Activated CD4-positive, alpha-beta T cell treated with anti-CD3 and anti-CD28 coated beads for 36 hours (primary cell): ENCODE measurements at regions of chr1 and their contacts with region 1.

Region 1: DNA sequence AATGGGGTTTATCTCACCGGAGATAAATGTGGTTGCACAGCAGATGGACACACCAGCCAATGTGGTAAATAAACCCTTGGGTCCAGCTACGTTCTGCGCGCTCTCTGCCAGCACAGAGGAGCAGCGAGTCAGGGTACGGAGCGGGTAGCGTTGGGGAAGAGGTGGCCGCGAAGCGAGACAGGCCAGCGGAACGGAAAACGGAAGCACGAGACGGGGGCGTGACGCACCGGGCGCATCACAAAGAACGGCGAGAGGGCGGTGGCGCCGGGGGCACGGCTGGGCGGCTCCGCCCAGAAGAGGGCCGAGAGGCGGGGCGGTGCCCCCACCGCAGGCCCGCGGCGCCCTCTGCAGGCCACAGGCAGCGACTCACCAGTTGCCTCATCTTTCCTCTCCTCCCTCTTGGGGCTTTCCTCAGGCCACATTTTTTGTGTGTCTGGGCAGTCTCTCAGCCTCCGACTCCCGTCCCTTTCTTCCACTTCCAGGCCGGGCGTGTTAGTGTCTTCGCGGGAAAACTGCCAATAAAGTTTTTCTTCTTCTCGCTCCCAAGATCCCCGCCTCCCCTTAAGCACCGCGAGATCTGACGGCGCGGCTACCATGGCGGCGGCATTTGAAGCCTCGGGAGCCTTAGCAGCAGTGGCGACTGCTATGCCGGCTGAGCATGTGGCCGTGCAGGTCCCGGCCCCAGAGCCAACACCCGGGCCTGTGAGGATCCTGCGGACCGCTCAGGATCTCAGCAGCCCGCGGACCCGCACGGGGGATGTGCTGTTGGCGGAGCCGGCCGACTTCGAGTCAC is at the start of gene DDX20:
- DNase-seq: peak; percentile 97
- ATAC-seq: peak; percentile 90
- H3K4me3 Mint-ChIP-seq: peak within 1 kb of the TSS; percentile 83
- H3K27ac Mint-ChIP-seq: peak within 1 kb of the TSS; percentile 98
- H3K4me1 Mint-ChIP-seq: peaks cover 35% of the 10 kb centered on the region
- H3K27me3 Mint-ChIP-seq: no peaks in the 10 kb centered on the region
- total RNA-seq, gene DDX20: 13.5 to 13.6 TPM

Region 2: DNA sequence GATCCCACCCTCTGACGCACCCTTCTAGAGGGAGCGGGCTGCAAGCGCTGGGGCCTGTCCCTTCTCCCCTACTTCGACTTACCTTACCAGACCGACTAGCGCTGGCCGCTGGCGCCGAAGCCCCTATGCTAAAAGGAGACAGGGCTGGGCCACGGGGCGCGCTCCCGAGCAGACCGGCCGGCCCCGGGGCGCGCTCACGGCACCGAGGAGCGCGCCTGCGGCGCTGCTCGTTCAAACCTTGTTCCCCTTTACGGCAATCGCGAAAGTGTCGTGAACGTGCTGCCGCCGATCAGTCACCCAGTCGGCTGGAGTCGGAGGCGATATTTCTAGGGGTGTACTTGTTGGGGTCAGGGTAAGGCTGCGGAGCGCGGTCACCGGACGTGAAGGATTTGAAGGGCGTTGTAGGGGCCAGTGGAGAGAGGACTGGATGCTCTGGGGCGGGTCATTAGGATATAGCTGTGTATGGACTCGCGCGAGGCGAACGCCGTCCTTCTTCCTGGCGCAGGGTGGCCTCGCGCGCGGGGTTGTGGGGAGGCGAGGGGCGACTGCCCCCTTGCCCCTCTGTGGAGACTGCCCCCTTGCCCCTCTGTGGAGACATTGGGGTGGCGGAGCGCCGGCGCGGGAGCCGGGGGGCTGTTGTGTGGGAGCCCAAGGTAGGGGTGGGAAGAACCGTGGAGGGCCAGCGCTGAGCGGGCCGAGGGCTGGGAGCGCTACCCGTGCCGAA is 615.4 kb before region 1 on chr1 and contains the starts of genes CEPT1 and DRAM2:
- CTCF ChIA-PET with region 1: no interaction called
- POLR2A ChIA-PET with region 1: no interaction called
- intact Hi-C with region 1: loop called (anchors 2 to 10 kb)
- DNase-seq: peak; percentile 98
- ATAC-seq: peak; percentile 78
- H3K4me3 Mint-ChIP-seq: peak within 1 kb of the TSS; percentile 95
- H3K27ac Mint-ChIP-seq: peak within 1 kb of the TSS; percentile 99
- H3K4me1 Mint-ChIP-seq: peaks cover 53% of the 10 kb centered on the region
- H3K27me3 Mint-ChIP-seq: no peaks in the 10 kb centered on the region
- total RNA-seq, gene CEPT1: 34.7 to 49.1 TPM
- total RNA-seq, gene DRAM2: 30.4 to 34.4 TPM

Region 3: DNA sequence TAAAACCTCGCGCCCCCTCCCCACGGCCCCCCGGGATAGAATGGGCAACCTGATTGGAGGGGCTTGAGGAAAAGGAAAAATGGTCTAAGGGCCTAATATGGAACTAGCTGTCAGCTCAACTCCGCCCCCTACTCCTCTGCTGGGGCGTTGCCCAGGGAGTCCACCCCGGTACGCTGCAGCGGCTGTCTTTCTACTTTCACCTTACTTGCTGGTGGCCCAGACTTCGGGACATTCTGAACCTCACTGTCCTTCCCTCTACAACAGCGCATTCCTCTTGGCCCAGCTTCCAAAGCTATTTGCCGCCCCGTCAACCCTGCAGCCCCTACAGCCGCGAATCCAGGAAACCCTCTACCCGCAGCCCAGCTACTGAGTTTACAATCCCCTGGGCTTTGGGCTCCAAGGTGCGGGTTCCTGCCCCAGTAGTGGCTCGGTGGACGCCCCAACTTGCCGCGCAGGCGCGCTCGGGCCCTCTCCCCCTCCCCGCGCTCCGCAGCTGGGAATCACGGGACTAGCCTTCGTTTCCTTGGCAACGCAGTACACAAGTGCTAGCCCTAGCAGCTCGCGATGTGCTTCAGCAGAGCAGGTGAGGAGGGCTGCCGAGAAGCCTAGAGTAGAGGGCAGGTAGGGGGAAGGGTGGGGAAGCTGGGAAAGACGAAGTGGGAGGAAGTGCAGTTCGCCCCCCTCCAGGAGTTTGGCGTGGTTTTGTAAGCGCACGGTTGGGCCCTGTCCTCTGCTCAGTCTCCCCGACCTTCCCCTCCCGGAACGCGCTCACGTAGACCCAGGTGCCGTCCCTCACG is 409.2 kb before region 1 on chr1:
- CTCF ChIA-PET with region 1: interaction called, 3 read pairs
- POLR2A ChIA-PET with region 1: no interaction called
- intact Hi-C with region 1: loop called in 1 of 2 experiments (anchors 1 kb)
- DNase-seq: peak; percentile 88
- ATAC-seq: peak; percentile 97
- H3K4me3 Mint-ChIP-seq: peak overlapping the region; percentile 78
- H3K27ac Mint-ChIP-seq: peak overlapping the region; percentile 68
- H3K4me1 Mint-ChIP-seq: peaks cover 17% of the 10 kb centered on the region
- H3K27me3 Mint-ChIP-seq: no peaks in the 10 kb centered on the region

Region 4: DNA sequence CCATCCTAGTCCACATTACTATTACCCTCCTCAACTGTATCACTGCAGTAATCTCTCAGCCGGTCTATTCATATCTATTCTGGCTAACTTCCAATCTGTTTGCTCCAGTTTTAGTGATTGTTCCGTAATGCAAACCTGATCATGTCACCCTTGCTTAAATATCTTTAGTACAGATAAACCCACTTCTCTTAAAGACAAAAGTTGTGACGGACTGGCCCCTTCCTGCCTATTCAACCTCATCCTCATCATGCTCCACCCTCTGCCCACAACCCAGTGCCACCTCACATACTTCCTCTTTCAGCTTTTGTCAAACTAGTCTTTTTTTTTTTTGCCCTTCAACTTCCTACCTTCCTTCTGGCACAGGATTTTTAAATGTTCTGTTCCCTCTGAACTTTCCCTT is 284.5 kb before region 1 on chr1:
- CTCF ChIA-PET with region 1: interaction called, 5 read pairs
- POLR2A ChIA-PET with region 1: no interaction called
- intact Hi-C with region 1: loop called in 1 of 2 experiments (anchors 5 kb)
- DNase-seq: peak; percentile 76
- ATAC-seq: peak; percentile 82
- H3K4me3 Mint-ChIP-seq: no peak overlapping the region
- H3K27ac Mint-ChIP-seq: no peak overlapping the region
- H3K4me1 Mint-ChIP-seq: peaks cover 35% of the 10 kb centered on the region
- H3K27me3 Mint-ChIP-seq: no peaks in the 10 kb centered on the region

Region 5: DNA sequence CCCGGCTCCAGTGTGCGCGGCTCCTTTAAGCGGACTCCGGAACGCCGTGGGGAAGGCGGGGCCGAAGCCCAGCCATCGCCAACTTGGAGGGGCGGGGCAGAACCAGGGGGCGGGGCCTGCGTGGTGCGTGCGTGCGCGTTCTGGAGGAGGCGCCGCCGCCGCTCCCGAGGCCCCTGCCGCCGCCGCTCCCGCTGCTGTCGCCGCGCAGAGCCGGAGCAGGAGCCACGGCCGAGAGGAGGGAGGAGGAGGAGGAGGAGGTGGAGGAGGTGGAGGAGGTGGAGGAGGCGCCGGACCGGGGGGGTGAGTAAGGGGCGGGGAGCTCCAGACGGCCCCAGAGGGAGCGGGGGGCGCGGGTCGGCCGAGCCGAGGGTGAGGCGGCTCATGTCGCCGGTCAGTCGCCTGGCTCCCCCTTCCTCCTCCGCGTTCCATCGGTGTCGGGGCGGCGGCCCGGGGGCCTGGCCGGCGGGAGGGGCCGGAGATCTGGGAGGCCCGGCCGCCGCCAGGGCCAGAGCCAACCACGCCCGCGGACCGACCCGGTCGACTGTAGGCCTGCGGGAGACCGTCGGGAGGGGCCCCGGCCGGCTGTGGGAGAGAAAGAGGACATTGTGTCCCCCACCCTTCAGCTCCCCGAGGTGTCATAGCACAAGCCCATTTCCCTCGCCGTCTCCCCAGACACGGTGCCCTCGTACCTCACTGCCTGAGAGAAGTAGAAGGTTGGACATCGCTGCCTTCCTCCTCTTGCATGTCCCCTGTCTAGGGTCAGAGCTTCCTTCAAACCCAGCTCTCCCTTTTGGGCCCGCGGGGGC is 135.7 kb before region 1 on chr1 and contains the start of gene RAP1A:
- CTCF ChIA-PET with region 1: no interaction called
- POLR2A ChIA-PET with region 1: interaction called, 3 read pairs
- intact Hi-C with region 1: loop called (anchors 1 to 5 kb)
- DNase-seq: peak; percentile 98
- ATAC-seq: peak; percentile 71
- H3K4me3 Mint-ChIP-seq: peak within 1 kb of the TSS; percentile 96
- H3K27ac Mint-ChIP-seq: peak within 1 kb of the TSS; percentile 97
- H3K4me1 Mint-ChIP-seq: peaks cover 72% of the 10 kb centered on the region
- H3K27me3 Mint-ChIP-seq: no peaks in the 10 kb centered on the region
- total RNA-seq, gene RAP1A: 182 to 214 TPM

Region 6: DNA sequence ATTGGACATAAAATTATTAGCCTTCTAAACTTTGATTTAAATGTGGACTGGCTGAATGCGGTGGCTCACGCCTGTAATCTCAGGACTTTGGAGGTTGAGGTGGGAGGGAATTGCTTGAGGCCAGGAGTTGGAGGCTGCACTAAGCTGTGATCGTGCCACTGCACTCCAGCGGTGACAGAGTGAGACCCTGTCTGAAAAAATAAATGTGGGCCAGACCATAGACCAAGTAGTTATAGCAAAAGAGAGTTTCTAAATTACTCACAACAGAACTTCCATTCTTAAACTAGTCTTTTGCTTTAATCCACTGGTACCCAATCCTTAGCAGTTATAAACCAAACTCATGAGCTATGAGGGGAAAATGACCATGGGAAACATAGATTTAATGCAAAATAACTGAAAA is 100.7 kb before region 1 on chr1:
- CTCF ChIA-PET with region 1: no interaction called
- POLR2A ChIA-PET with region 1: no interaction called
- intact Hi-C with region 1: no loop called
- DNase-seq: no peak
- ATAC-seq: peak; percentile 83
- H3K4me3 Mint-ChIP-seq: no peak overlapping the region
- H3K27ac Mint-ChIP-seq: peak overlapping the region; percentile 28
- H3K4me1 Mint-ChIP-seq: peaks cover 57% of the 10 kb centered on the region
- H3K27me3 Mint-ChIP-seq: no peaks in the 10 kb centered on the region

Region 7: DNA sequence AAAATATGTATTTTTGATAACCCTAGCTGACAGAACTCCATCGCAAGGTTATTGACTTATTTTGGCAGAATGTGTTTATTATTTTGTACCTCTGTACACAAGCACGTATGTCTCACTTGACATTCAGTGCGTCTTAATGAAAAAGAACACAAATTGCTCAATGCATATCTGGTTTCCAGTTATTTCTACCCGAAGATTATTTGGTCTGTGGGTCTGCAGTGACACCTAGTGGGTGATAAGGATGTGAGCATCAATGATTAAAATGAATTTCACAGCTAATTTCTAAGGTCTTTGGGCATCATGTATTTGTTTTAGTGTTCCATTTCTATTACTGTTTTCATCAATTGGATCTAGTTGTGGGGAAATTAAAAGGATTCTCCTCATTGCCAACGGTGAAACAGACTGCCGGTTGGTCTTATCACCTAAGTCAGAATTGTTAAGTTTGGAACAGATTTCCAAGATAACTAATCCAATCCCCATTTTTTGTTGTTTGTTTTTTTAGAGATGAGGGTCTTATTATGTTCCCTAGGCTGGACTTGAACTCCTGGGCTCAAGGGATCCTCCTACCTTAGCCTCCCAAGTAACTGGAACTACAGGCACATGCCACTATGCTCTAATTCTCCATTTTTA is 14.1 kb after region 1 on chr1:
- CTCF ChIA-PET with region 1: interaction called, 18 read pairs
- POLR2A ChIA-PET with region 1: no interaction called
- intact Hi-C with region 1: no loop called
- DNase-seq: peak; percentile 66
- ATAC-seq: no peak
- H3K4me3 Mint-ChIP-seq: no peak overlapping the region
- H3K27ac Mint-ChIP-seq: no peak overlapping the region
- H3K4me1 Mint-ChIP-seq: peaks cover 12% of the 10 kb centered on the region
- H3K27me3 Mint-ChIP-seq: no peaks in the 10 kb centered on the region